ENCODE measurements at regions of chr11 and their contacts with region 1.

Region 1: DNA sequence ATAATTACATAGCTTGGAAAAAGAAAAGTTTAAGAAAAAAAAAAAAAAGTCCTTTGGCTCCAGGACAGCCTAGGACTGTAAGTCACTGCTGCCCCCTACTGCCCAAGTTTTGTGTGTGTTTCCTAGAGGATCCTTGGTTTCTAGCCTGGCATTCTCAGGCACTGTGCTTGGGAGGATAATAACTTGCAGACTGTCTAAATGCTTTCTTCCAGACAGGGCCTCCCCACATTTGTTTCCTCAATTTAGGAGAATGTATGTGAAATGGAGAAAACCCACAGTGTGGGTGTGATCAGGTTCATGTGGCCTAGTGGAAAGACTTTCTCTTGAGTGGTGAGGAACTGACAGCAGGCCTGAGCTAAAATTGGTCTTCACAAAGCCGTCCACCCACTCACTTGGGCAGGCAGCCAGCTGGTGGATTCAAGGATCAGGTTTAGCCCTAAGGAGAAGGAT is 191.0 kb downstream of the NAV2 start:
- DNase-seq: peak; percentile 85
- ATAC-seq: peak; percentile 83
- H3K4me3 Mint-ChIP-seq: no peak overlapping the region
- H3K27ac Mint-ChIP-seq: no peak overlapping the region
- H3K4me1 Mint-ChIP-seq: peaks cover 26% of the 10 kb centered on the region
- H3K27me3 Mint-ChIP-seq: no peaks in the 10 kb centered on the region
- CTCF ChIP-seq: peak; percentile 75

Region 2: DNA sequence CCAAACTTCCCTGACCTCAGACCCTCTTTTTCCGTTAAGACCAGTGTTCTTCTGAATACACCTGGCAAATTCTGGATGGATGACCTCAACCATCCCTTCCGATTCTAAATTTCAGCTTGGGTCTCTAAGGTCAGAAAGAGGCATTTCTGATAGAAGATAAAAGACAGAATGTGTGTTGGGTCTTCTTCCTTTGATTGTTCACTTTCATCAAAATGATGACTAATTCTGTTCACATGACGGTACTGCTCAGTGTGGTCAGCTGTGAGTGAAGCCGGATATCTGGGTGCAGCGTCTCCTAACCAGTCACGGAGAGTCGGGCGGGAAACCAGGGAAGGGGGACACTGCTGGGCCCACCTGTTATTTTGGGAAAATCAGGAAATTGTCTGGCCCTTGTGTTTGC is 342.6 kb before region 1 on chr11:
- CTCF ChIA-PET with region 1: interaction called, 33 read pairs
- POLR2A ChIA-PET with region 1: no interaction called
- DNase-seq: no peak
- ATAC-seq: no peak
- H3K4me3 Mint-ChIP-seq: no peak overlapping the region
- H3K27ac Mint-ChIP-seq: no peak overlapping the region
- H3K4me1 Mint-ChIP-seq: peaks cover 20% of the 10 kb centered on the region
- H3K27me3 Mint-ChIP-seq: no peaks in the 10 kb centered on the region; the same call in 1 of the 2 replicates
- CTCF ChIP-seq: no peak

Region 3: GRCh38 chr11:19777377-19778102 is 126.1 kb before region 1 on chr11:
- CTCF ChIA-PET with region 1: interaction called, 13 read pairs
- POLR2A ChIA-PET with region 1: no interaction called
- DNase-seq: no peak
- ATAC-seq: peak; percentile 38
- H3K4me3 Mint-ChIP-seq: peak overlapping the region; percentile 86
- H3K27ac Mint-ChIP-seq: peak overlapping the region; percentile 87
- H3K4me1 Mint-ChIP-seq: peaks cover 68% of the 10 kb centered on the region
- H3K27me3 Mint-ChIP-seq: peaks cover 21% of the 10 kb centered on the region
- CTCF ChIP-seq: no peak

Region 4: GRCh38 chr11:19814421-19814820 is 89.2 kb before region 1 on chr11:
- CTCF ChIA-PET with region 1: interaction called, 34 read pairs
- POLR2A ChIA-PET with region 1: interaction called, 5 read pairs
- DNase-seq: peak; percentile 34
- ATAC-seq: no peak
- H3K4me3 Mint-ChIP-seq: no peak overlapping the region
- H3K27ac Mint-ChIP-seq: peak overlapping the region; percentile 99
- H3K4me1 Mint-ChIP-seq: peaks cover 96% of the 10 kb centered on the region
- H3K27me3 Mint-ChIP-seq: no peaks in the 10 kb centered on the region
- CTCF ChIP-seq: no peak

Region 5: DNA sequence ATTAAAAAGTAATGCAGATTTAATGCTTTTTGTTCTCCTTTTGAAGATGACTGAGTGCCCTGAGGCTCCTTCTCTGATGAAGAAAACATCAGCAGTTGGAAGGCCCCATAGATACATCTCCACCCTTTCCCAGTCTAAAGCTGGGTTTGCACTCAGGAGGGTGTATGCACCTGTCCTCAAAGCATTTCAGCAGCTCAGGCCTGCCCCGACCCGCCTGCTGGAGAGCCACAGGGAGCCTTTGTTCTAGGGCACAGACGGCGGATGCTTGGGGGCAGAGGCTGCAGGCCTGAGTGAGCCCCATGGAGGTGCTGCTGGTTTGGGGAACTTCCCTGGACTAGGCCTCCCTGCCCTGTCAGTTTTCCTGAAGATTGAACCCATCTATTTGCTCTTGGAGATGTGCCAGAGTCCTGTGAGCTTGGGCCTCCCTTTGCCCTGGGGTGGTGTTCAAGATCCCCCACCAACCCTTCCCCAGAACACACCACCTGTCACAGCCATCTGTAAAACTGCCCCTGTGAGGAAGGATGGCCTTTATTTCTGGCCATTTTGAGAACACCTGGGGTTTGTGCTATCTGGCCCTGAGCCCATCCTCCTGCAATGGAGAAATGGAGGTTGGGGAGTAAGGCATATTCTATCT is 31.0 kb before region 1 on chr11:
- CTCF ChIA-PET with region 1: interaction called, 12 read pairs
- POLR2A ChIA-PET with region 1: no interaction called
- DNase-seq: peak; percentile 68
- ATAC-seq: peak; percentile 87
- H3K4me3 Mint-ChIP-seq: no peak overlapping the region
- H3K27ac Mint-ChIP-seq: peak overlapping the region; percentile 84
- H3K4me1 Mint-ChIP-seq: peaks cover 66% of the 10 kb centered on the region
- H3K27me3 Mint-ChIP-seq: no peaks in the 10 kb centered on the region
- CTCF ChIP-seq: no peak

Region 6: GRCh38 chr11:19951558-19952115 is 48.0 kb after region 1 on chr11:
- CTCF ChIA-PET with region 1: interaction called, 11 read pairs
- POLR2A ChIA-PET with region 1: no interaction called
- DNase-seq: no peak
- ATAC-seq: peak; percentile 5; the same call in 1 of the 2 replicates
- H3K4me3 Mint-ChIP-seq: no peak overlapping the region
- H3K27ac Mint-ChIP-seq: no peak overlapping the region; the same call in 1 of the 2 replicates
- H3K4me1 Mint-ChIP-seq: peaks cover 46% of the 10 kb centered on the region
- H3K27me3 Mint-ChIP-seq: no peaks in the 10 kb centered on the region
- CTCF ChIP-seq: peak; percentile 36

Measured in WTC11 (cell line).